Endothelial cell of umbilical vein (primary cell): ENCODE measurements at regions of chr12 and their contacts with region 1.

Region 1: DNA sequence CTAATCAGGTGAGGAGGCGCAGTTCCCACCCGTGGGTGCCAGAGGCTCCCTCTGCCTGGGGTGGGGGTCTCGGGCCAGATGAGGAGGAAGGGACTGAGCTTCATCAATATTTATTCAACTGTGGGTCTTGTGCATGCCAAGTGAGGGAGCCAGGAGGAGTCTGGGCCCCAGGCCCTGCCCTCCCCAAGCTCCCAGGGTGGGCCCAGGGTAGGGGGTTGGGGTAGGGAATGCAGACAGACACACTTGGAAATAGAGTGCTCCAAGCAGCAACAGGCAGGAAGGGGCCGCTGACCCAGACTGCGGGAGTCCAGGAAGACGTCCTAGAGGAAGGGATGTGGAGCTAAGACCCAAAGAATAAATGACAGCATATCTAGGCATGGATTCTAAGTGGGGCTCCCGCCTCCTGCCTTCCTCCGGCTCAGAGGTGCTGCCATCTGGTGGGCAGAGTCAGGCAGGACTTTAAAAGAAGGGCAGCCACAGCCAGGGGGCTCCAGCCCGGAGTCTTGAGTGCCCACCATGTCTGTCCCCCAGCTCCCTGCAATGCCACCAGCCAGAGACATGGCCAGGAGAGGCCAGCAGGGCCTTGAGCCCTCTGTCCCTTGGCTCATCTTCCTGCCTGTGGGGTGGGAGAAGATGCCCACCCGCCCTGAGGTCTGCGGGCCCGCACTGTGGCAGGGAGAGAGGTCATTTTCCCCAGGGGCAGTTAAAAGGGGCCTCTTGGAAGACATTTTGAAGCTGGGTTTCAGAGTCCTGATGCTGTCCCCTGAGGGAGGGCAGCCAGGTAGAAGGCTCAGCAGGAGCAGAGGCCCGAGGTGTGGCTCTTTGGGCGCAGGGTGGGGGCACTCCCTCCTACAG is 70.1 kb downstream of the PHETA1 start:
- DNase-seq: peak; percentile 41
- H3K4me3 ChIP-seq: no peak overlapping the region
- H3K27ac ChIP-seq: no peak overlapping the region
- H3K4me1 ChIP-seq: no peaks in the 10 kb centered on the region
- H3K27me3 ChIP-seq: no peaks in the 10 kb centered on the region
- CTCF ChIP-seq: peak; percentile 84 to 89
- POLR2A ChIP-seq: no peak

Region 2: GRCh38 chr12:110937104-110937641 is 361.6 kb before region 1 on chr12:
- CTCF ChIA-PET with region 1: interaction called, 31 read pairs
- POLR2A ChIA-PET with region 1: no interaction called
- dilution Hi-C with region 1: no loop called
- intact Hi-C with region 1: loop called (anchors 1 kb)
- DNase-seq: peak; percentile 56
- H3K4me3 ChIP-seq: no peak overlapping the region
- H3K27ac ChIP-seq: no peak overlapping the region
- H3K4me1 ChIP-seq: no peaks in the 10 kb centered on the region
- H3K27me3 ChIP-seq: no peaks in the 10 kb centered on the region
- CTCF ChIP-seq: peak; percentile 94 to 98
- POLR2A ChIP-seq: no peak

Region 3: DNA sequence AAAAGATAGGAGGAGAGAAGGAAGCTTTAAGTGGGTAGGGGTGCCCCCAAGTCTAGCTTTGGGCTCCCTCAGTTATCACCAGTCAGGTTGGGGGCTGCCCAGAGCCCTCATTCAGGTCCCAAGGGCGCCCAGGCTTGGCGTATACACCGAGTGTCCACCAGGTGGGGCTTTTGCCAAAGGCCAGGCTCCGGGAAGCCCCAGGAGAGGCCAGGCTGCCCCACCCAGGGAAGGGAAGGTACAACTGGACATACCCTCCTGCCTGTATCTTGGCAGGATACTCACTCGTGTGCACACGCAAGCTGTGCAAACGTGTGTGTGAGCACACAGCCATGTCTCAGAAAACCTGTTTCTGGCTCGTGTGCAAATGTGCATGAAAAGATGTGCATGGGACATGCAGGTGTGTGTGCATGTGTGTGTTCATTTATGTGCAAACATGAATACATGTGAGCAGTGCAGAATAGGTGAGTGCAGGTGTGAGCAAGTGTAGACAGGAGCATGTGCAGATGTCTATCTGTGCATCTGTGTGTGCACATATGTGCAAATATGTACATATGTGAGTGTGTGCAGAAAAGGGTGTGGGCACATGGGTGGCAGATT is 274.5 kb before region 1 on chr12:
- CTCF ChIA-PET with region 1: interaction called, 19 read pairs
- POLR2A ChIA-PET with region 1: no interaction called
- dilution Hi-C with region 1: no loop called
- intact Hi-C with region 1: no loop called
- DNase-seq: peak; percentile 30
- H3K4me3 ChIP-seq: no peak overlapping the region
- H3K27ac ChIP-seq: no peak overlapping the region
- H3K4me1 ChIP-seq: no peaks in the 10 kb centered on the region
- H3K27me3 ChIP-seq: peaks cover 2 to 5% of the 10 kb centered on the region in 2 experiments
- CTCF ChIP-seq: peak; percentile 67 to 84
- POLR2A ChIP-seq: no peak

Region 4: DNA sequence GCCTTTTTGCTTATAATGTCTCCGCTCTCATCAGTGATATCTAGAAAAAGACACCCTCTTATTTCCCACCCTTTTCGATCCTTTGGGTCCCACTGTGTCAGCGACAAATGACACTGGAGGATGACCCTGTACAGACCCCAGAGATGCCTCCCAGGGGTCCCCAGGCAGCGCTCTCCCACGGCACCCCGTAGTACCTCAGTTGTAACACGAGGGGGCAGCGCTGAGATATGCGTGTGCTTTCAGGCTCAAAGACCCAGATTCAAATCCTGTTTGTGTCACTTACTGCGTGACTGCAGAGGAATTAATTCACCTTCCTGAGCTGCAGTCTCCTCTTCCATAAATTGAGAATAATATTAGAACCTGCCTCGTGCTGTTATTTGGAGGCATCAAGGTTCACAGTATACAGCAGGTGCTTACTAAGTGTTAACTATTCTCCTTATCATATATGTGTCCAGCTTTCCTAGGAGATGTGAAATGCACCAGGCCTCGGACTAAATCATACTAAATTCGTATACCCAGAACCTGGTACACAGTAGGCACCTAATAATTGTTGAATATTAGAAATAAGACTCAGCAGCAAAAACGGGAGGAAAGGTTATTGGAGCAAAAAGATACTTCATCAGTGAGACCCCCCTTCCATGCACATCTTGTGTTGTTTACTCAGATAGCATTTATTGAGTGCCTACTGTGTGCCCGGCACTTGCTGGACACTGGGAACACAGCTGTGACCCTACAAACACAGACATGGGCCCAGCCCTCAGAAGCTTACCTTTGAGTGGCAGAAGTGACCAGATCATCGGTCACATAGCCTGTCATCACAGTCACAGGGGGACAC is 29.9 kb before region 1 on chr12:
- CTCF ChIA-PET with region 1: interaction called, 21 read pairs
- POLR2A ChIA-PET with region 1: no interaction called
- dilution Hi-C with region 1: no loop called
- intact Hi-C with region 1: loop called (anchors 2 kb)
- DNase-seq: no peak
- H3K4me3 ChIP-seq: no peak overlapping the region
- H3K27ac ChIP-seq: no peak overlapping the region
- H3K4me1 ChIP-seq: no peaks in the 10 kb centered on the region
- H3K27me3 ChIP-seq: peaks cover 0 to 5% of the 10 kb centered on the region in 2 experiments
- CTCF ChIP-seq: peak; percentile 50 to 57
- POLR2A ChIP-seq: no peak

Region 5: DNA sequence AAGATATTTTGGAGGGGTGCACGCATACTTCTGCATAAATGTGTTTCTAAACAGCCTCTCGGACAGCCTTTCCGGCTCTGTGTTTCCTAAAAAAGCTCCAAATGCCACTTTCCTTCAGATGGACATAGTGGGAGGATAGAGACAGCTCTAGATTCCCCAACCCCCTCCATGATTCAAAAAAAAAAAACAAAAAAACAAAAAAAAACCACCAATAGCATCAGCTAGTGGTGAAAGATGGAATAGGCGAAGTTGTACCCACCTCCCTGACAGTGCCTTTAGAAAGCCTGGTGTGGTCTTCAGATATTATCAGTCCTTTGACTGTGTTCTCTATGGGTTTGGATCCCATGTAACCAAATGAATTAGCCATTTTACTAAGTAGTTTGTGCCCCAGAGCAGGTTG is 24.0 kb before region 1 on chr12:
- CTCF ChIA-PET with region 1: interaction called, 21 read pairs
- POLR2A ChIA-PET with region 1: no interaction called
- dilution Hi-C with region 1: no loop called
- intact Hi-C with region 1: loop called (anchors 2 kb)
- DNase-seq: no peak
- H3K4me3 ChIP-seq: no peak overlapping the region
- H3K27ac ChIP-seq: no peak overlapping the region
- H3K4me1 ChIP-seq: no peaks in the 10 kb centered on the region
- H3K27me3 ChIP-seq: peaks cover 0 to 5% of the 10 kb centered on the region in 2 experiments
- CTCF ChIP-seq: peak in 1 of 2 donors; percentile 10
- POLR2A ChIP-seq: no peak

Region 6: GRCh38 chr12:111413442-111414086 is 114.8 kb after region 1 on chr12:
- CTCF ChIA-PET with region 1: no interaction called
- POLR2A ChIA-PET with region 1: no interaction called
- dilution Hi-C with region 1: no loop called
- intact Hi-C with region 1: no loop called
- DNase-seq: peak; percentile 43
- H3K4me3 ChIP-seq: no peak overlapping the region
- H3K27ac ChIP-seq: peak overlapping the region; percentile 87
- H3K4me1 ChIP-seq: peaks cover 58% of the 10 kb centered on the region
- H3K27me3 ChIP-seq: no peaks in the 10 kb centered on the region
- CTCF ChIP-seq: no peak
- POLR2A ChIP-seq: no peak